Activated naive CD4-positive, alpha-beta T cell treated with anti-CD3 and anti-CD28 coated beads for 36 hours (primary cell): ENCODE measurements at regions of chr12 and their contacts with region 1.

Region 1: GRCh38 chr12:57803319-57803893 is 15.1 kb downstream of the AVIL start:
- DNase-seq: peak; percentile 51
- H3K4me3 Mint-ChIP-seq: no peak overlapping the region
- H3K27ac Mint-ChIP-seq: no peak overlapping the region
- H3K4me1 Mint-ChIP-seq: no peaks in the 10 kb centered on the region
- H3K27me3 Mint-ChIP-seq: no peaks in the 10 kb centered on the region

Region 2: DNA sequence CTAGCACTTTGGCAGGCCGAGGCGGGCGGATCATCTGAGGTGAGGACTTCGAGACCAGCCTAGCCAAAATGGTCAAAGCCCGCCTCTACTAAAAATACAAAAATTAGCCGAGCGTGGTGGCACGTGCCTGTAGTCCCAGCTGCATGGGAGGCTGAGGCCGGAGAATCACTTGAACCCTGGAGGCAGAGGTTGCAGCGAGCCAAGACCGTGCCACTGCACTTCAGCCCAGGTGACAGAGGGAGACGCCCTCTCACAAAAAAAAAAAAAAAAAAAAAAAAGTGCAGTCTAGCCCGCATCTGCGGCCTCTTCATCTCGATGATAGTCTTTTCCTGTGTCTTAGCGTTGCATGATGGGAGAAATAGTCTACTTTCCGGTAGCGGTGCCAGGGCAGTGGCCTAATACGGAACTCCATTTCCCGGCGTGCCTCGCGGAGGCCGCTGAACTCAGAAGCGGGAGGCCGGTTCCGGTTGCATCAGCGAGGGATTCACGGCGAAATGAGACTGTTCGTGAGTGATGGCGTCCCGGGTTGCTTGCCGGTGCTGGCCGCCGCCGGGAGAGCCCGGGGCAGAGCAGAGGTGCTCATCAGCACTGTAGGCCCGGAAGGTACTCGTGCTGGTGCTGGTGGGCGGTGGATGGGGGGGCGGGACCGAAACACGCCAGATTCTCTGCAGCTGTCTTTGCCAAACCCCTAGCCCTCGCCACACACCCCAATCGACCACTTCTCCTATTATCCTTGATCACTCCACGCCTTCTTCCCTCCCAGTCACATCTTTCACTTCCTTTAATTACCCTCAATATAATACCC is 315.6 kb before region 1 on chr12 and contains the start of gene MARS1:
- CTCF ChIA-PET with region 1: no interaction called
- intact Hi-C with region 1: no loop called
- DNase-seq: peak; percentile 97
- H3K4me3 Mint-ChIP-seq: peak within 1 kb of the TSS; percentile 97
- H3K27ac Mint-ChIP-seq: peak within 1 kb of the TSS; percentile 94
- H3K4me1 Mint-ChIP-seq: peaks cover 49% of the 10 kb centered on the region
- H3K27me3 Mint-ChIP-seq: no peaks in the 10 kb centered on the region
- total RNA-seq, gene MARS1: 481 to 489 TPM

Region 3: GRCh38 chr12:57813971-57814772 is 10.8 kb after region 1 on chr12:
- CTCF ChIA-PET with region 1: interaction called, 15 read pairs
- intact Hi-C with region 1: no loop called
- DNase-seq: no peak
- H3K4me3 Mint-ChIP-seq: no peak overlapping the region
- H3K27ac Mint-ChIP-seq: no peak overlapping the region
- H3K4me1 Mint-ChIP-seq: no peaks in the 10 kb centered on the region
- H3K27me3 Mint-ChIP-seq: no peaks in the 10 kb centered on the region

Region 4: DNA sequence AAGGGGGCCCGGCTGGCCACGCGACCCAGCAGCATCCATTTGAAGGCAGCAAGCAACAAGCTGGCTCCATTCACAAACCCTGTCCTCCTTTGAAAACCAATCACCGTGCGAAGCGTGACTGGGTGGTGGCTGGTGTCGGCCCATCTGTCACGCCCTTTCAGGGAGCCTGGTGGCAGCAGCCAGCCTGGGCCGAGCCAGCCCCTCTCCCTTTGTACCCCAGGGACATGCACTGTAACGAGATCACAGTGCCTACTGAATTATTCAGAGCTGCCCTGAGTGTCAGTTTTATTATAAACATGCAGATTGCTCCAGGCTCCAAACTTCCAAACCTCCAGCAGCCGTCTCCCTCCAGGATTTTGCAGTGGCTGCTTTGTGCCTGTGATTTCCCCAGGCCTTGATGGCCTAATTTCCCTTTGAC is 65.5 kb after region 1 on chr12:
- CTCF ChIA-PET with region 1: no interaction called
- intact Hi-C with region 1: no loop called
- DNase-seq: no peak
- H3K4me3 Mint-ChIP-seq: no peak overlapping the region
- H3K27ac Mint-ChIP-seq: no peak overlapping the region
- H3K4me1 Mint-ChIP-seq: peaks cover 6% of the 10 kb centered on the region
- H3K27me3 Mint-ChIP-seq: no peaks in the 10 kb centered on the region